MCF 10A (cell line): ENCODE measurements at regions of chr1 and their contacts with region 1.

Region 1: GRCh38 chr1:214808845-214809460 is 206.0 kb downstream of the CENPF start:
- DNase-seq: peak; percentile 84
- H3K4me3 Mint-ChIP-seq: no peak overlapping the region
- H3K27ac Mint-ChIP-seq: no peak overlapping the region
- H3K4me1 Mint-ChIP-seq: no peaks in the 10 kb centered on the region
- H3K27me3 Mint-ChIP-seq: no peaks in the 10 kb centered on the region
- CTCF ChIP-seq: peak; percentile 93

Region 2: GRCh38 chr1:214602764-214603657 is 205.9 kb before region 1 on chr1 and contains the start of gene CENPF:
- CTCF ChIA-PET with region 1: no interaction called
- POLR2A ChIA-PET with region 1: no interaction called
- intact Hi-C with region 1: no loop called
- DNase-seq: peak; percentile 100
- H3K4me3 Mint-ChIP-seq: peak within 1 kb of the TSS; percentile 96
- H3K27ac Mint-ChIP-seq: peak within 1 kb of the TSS; percentile 94
- H3K4me1 Mint-ChIP-seq: peaks cover 16% of the 10 kb centered on the region
- H3K27me3 Mint-ChIP-seq: no peaks in the 10 kb centered on the region
- CTCF ChIP-seq: peak; percentile 28
- total RNA-seq, gene CENPF: 88.8 and 135 TPM in 2 replicates

Region 3: GRCh38 chr1:215076318-215076717 is 267.4 kb after region 1 on chr1:
- CTCF ChIA-PET with region 1: interaction called, 16 read pairs
- POLR2A ChIA-PET with region 1: no interaction called
- intact Hi-C with region 1: loop called (anchors 1 kb)
- DNase-seq: peak; percentile 83
- H3K4me3 Mint-ChIP-seq: no peak overlapping the region
- H3K27ac Mint-ChIP-seq: peak overlapping the region; percentile 10
- H3K4me1 Mint-ChIP-seq: peaks cover 4% of the 10 kb centered on the region
- H3K27me3 Mint-ChIP-seq: no peaks in the 10 kb centered on the region
- CTCF ChIP-seq: peak; percentile 55

Region 4: GRCh38 chr1:215132156-215132555 is 323.2 kb after region 1 on chr1:
- CTCF ChIA-PET with region 1: interaction called, 33 read pairs
- POLR2A ChIA-PET with region 1: interaction called, 10 read pairs
- intact Hi-C with region 1: no loop called
- DNase-seq: peak; percentile 44
- H3K4me3 Mint-ChIP-seq: no peak overlapping the region
- H3K27ac Mint-ChIP-seq: no peak overlapping the region
- H3K4me1 Mint-ChIP-seq: peaks cover 21% of the 10 kb centered on the region
- H3K27me3 Mint-ChIP-seq: no peaks in the 10 kb centered on the region
- CTCF ChIP-seq: no peak

Region 5: DNA sequence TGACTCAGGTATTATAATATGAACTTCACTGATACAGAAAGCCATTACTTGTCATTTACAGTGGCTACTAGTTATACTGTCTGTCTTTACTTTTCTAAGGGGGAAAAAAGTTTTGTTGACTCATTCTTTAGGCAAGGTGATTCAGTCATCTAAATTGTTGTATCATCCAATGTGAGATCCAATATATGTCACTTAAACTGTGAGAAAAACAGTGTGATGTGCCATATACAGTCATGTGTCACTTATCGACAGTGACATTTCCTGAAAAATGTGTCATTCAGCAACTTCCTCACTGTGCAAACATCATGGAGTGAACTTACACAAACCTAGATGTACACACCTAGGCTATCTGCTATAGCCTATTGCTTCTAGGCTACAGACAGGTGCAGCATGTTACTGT is 331.2 kb after region 1 on chr1:
- CTCF ChIA-PET with region 1: interaction called, 160 read pairs
- POLR2A ChIA-PET with region 1: interaction called, 28 read pairs
- intact Hi-C with region 1: no loop called
- DNase-seq: no peak
- H3K4me3 Mint-ChIP-seq: no peak overlapping the region
- H3K27ac Mint-ChIP-seq: no peak overlapping the region
- H3K4me1 Mint-ChIP-seq: peaks cover 6% of the 10 kb centered on the region
- H3K27me3 Mint-ChIP-seq: no peaks in the 10 kb centered on the region
- CTCF ChIP-seq: no peak

Region 6: GRCh38 chr1:215517441-215517891 is 708.5 kb after region 1 on chr1:
- CTCF ChIA-PET with region 1: interaction called, 9 read pairs
- POLR2A ChIA-PET with region 1: no interaction called
- intact Hi-C with region 1: loop called (anchors 1 kb)
- DNase-seq: peak; percentile 79
- H3K4me3 Mint-ChIP-seq: no peak overlapping the region
- H3K27ac Mint-ChIP-seq: peak overlapping the region; percentile 65
- H3K4me1 Mint-ChIP-seq: peaks cover 12% of the 10 kb centered on the region
- H3K27me3 Mint-ChIP-seq: no peaks in the 10 kb centered on the region
- CTCF ChIP-seq: peak; percentile 87